Activated CD4-positive, alpha-beta T cell treated with anti-CD3 and anti-CD28 coated beads, Interleukin-2, amount 10 ng/mL, durations not matched to agents 24 days and 14 days (primary cell): ENCODE measurements at regions of chr21 and their contacts with region 1.

Region 1: DNA sequence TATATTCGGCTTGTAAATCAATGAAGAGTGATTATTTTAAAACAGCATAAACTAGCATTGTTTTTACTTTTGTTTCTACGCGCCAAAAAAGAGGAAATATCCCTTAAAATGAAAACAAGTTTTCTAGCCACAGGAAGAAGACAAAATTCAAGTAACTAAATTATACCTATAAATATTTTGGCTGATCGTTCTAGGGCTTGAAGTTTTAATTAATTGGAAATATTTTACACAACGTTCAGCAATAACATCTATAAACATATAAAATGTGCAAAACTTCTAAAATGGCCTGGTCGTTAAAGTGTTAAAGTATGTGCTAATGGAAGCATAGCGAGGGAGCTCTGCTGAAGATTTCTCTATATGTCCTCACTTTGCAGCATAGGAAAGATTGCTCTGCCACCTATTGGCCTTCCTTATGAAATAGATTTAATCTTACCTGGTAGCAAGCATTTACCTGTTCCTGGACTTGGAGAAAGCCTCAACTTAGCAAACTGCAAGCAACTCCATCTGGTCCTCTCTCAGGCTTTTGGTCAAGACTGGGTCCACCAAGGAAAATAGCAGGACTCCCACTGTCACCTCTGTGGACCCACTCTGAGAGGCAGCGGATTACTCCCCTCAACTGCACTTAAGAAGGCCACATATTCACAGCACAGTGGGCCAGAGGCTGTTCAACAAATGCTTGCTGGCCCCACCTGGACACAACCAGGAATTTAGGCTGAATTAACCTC is 351.3 kb upstream of the RUNX1 start:
- DNase-seq: peak; percentile 81
- H3K4me3 Mint-ChIP-seq: no peak overlapping the region
- H3K27ac Mint-ChIP-seq: no peak overlapping the region
- H3K4me1 Mint-ChIP-seq: peaks cover 28% of the 10 kb centered on the region
- H3K27me3 Mint-ChIP-seq: peaks cover 9% of the 10 kb centered on the region

Region 2: DNA sequence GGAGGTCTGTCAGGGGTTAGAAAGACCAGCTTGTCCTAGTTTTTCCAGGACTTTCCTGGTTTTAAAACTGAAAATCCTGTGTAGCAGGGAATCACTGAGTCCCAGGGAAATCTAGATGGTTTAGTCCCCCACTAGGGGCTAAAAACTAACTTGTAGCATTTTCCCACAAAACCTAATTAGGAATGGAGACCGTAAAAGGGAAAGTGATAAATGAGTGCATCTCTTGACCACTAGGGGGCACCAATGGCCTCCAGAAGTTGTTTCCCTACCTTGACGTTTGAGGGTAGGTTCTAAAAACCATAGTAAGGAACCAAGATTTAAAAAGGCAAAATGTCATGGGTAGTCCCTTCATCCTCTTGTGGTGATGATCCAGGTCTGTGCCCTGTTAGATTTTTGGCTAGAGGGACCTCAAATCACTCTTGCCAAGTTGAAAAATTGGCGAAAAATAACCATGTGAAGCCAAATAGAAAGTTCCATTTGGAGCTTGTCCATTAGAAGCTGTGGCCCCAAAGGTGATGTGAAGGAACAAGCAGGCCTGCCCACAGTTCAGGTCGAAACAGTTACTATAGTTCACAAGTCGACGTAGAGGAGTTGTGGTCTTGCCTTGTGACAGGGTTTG is 707.1 kb before region 1 on chr21:
- intact Hi-C with region 1: loop called (anchors 5 kb)
- DNase-seq: peak; percentile 83
- H3K4me3 Mint-ChIP-seq: no peak overlapping the region
- H3K27ac Mint-ChIP-seq: no peak overlapping the region
- H3K4me1 Mint-ChIP-seq: peaks cover 2% of the 10 kb centered on the region
- H3K27me3 Mint-ChIP-seq: peaks cover 38% of the 10 kb centered on the region

Region 3: DNA sequence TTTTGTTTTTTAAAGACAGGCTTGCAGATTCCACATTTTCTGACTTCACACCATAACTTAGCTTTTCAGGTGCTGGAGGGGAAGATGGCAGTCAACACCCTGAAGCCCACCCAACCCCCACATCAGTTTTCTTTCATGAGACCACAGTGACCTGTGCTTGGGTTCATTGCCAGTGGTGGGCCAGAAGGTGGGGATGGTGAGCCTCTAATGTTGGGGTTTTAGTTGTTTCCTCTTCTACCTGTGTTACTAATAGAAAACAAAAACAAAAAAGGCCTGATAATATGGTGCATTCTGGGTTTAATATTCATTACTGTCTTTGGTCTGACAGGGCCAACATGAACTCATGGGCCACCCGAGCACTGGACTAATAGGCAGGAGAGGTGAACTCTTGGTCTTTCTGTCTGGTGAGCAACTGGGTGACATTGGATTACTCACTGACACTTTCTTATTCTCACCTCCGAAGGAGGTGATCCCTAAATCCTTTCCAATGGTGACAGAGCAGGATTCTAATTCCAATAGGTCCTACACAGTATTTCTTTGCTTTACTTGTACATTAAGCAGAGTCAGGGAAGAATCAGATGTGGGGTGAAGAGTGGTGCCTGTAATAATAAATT is 598.8 kb before region 1 on chr21:
- intact Hi-C with region 1: loop called (anchors 5 kb)
- DNase-seq: peak; percentile 66
- H3K4me3 Mint-ChIP-seq: no peak overlapping the region
- H3K27ac Mint-ChIP-seq: no peak overlapping the region
- H3K4me1 Mint-ChIP-seq: peaks cover 24% of the 10 kb centered on the region
- H3K27me3 Mint-ChIP-seq: no peaks in the 10 kb centered on the region

Region 4: GRCh38 chr21:35138665-35139381 is 261.6 kb before region 1 on chr21:
- intact Hi-C with region 1: loop called (anchors 1 kb)
- DNase-seq: peak; percentile 68
- H3K4me3 Mint-ChIP-seq: peak overlapping the region; percentile 74
- H3K27ac Mint-ChIP-seq: peak overlapping the region; percentile 97
- H3K4me1 Mint-ChIP-seq: peaks cover 30% of the 10 kb centered on the region
- H3K27me3 Mint-ChIP-seq: no peaks in the 10 kb centered on the region

Region 5: DNA sequence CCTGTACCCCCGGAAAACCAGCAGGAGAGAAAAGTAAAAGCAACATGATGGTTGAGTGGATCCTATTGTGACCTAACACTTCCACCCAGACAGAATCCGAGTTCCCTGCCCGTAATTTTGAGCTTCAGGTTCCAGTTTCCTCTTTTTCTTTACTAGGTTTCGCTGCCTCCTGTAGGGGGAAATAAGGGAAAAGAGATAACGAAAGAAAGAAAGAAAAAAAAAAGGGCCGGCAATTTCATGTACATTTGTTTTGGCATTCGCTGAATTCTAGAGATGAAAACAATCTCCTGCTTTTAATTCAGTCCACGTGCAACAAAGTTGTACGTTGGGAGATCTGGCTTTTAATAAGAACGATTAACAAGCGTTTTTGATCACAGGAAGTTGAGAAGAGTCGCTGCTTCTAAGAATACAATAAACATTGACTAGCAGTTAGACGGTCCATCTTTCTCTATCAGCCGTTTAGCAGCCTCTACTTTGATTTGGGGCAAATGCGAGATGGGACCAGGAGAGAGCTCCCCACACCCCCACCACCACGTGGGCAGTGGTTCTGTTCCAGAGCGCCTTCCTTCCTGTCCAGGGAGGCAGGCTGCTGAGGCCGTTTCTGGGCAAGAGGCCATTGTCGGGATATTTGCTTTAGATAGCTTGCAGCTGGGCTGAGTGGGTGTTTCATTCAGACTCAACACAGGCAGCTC is 195.4 kb before region 1 on chr21:
- intact Hi-C with region 1: no loop called
- DNase-seq: peak; percentile 62
- H3K4me3 Mint-ChIP-seq: peak overlapping the region; percentile 74
- H3K27ac Mint-ChIP-seq: peak overlapping the region; percentile 84
- H3K4me1 Mint-ChIP-seq: peaks cover 32% of the 10 kb centered on the region
- H3K27me3 Mint-ChIP-seq: no peaks in the 10 kb centered on the region

Region 6: GRCh38 chr21:35342440-35342839 is 58.0 kb before region 1 on chr21:
- intact Hi-C with region 1: loop called (anchors 5 kb)
- DNase-seq: no peak
- H3K4me3 Mint-ChIP-seq: peak overlapping the region; percentile 53
- H3K27ac Mint-ChIP-seq: peak overlapping the region; percentile 88
- H3K4me1 Mint-ChIP-seq: peaks cover 41% of the 10 kb centered on the region
- H3K27me3 Mint-ChIP-seq: no peaks in the 10 kb centered on the region

Region 7: DNA sequence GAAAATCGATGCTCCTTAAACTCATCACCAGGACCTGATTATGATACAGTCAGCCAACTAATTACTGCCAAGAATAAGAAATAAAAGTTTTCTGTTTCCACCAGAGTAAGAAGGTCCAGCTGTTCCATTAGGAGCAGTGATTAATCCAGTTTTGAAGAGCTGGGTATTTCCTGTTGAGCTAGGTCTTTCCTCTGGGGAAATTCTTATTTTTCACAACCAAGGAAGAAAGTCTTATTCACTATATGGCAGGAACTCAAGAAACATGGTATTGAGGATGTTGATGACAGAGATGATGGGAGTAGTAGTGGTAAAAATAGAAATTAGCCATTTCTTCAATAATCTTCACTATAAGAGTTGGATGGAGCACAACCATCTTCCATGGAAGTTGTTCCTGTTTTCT is 23.3 kb after region 1 on chr21:
- intact Hi-C with region 1: no loop called
- DNase-seq: no peak
- H3K4me3 Mint-ChIP-seq: no peak overlapping the region
- H3K27ac Mint-ChIP-seq: no peak overlapping the region
- H3K4me1 Mint-ChIP-seq: peaks cover 21% of the 10 kb centered on the region
- H3K27me3 Mint-ChIP-seq: peaks cover 3% of the 10 kb centered on the region

Region 8: GRCh38 chr21:35840197-35840799 is 439.9 kb after region 1 on chr21:
- intact Hi-C with region 1: loop called (anchors 10 kb)
- DNase-seq: peak; percentile 84
- H3K4me3 Mint-ChIP-seq: no peak overlapping the region
- H3K27ac Mint-ChIP-seq: no peak overlapping the region
- H3K4me1 Mint-ChIP-seq: no peaks in the 10 kb centered on the region
- H3K27me3 Mint-ChIP-seq: peaks cover 2% of the 10 kb centered on the region